GM10248 (cell line): ENCODE measurements at regions of chr22 and their contacts with region 1.

Region 1: GRCh38 chr22:44026630-44027511 is 2.8 kb downstream of the PARVB start:
- DNase-seq: peak; percentile 88
- CTCF ChIP-seq: no peak

Region 2: GRCh38 chr22:44037519-44038370 is 10.9 kb after region 1 on chr22:
- CTCF ChIA-PET with region 1: interaction called, 10 read pairs
- POLR2A ChIA-PET with region 1: interaction called, 25 read pairs
- DNase-seq: no peak
- CTCF ChIP-seq: no peak

Region 3: DNA sequence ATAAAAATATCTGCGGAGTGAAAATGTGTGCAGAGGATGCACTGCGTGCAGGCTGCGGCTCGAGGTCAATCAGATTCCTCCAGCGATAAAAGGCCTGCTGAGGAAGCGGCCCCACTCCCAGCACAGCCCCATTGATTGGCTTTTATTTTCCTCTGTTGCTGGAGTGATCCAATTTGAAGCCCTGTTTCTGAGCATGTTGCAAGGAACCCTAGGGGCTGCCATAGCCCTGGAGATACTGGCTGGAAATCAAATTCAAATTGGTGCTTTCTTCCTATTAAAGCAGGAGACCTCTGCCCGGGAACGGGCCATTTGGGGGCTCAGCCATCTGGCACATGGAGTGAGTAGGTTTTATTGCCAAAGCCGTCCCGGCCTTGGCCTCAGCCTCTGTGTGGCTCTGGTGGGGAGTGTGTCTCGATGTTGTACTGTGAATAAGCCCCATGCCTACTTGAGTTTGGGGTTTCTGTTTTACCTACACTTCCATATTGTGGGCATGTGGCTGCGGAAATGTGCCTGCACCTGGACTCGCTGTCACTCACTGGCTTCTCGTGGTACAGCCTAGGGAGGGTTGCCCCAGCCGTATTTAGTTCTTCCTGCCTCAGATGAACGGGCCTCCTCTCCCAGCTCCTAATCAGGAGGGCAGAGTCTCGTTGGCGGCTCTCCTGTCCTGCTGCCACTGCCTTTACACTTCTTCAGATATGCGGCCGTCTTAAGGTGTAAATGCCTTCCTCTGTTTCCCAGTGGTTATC is 22.8 kb after region 1 on chr22:
- CTCF ChIA-PET with region 1: interaction called, 5 read pairs
- POLR2A ChIA-PET with region 1: interaction called, 13 read pairs
- DNase-seq: no peak
- CTCF ChIP-seq: no peak

Region 4: GRCh38 chr22:44068422-44069191 is 41.7 kb after region 1 on chr22:
- CTCF ChIA-PET with region 1: interaction called, 6 read pairs
- POLR2A ChIA-PET with region 1: interaction called, 18 read pairs
- DNase-seq: peak; percentile 79
- CTCF ChIP-seq: peak; percentile 17